Activated T-helper 2 cell treated with anti-CD3 and anti-CD28 coated beads, Interferon-gamma antibody, Interleukin-2, Interleukin-4, amounts not matched to agents 10 μg/mL and 5 μg/mL and 100 μg/mL, durations not matched to agents 14 hours and 24 hours and 36 hours (primary cell): ENCODE measurements at regions of chr10 and their contacts with region 1.

Region 1: DNA sequence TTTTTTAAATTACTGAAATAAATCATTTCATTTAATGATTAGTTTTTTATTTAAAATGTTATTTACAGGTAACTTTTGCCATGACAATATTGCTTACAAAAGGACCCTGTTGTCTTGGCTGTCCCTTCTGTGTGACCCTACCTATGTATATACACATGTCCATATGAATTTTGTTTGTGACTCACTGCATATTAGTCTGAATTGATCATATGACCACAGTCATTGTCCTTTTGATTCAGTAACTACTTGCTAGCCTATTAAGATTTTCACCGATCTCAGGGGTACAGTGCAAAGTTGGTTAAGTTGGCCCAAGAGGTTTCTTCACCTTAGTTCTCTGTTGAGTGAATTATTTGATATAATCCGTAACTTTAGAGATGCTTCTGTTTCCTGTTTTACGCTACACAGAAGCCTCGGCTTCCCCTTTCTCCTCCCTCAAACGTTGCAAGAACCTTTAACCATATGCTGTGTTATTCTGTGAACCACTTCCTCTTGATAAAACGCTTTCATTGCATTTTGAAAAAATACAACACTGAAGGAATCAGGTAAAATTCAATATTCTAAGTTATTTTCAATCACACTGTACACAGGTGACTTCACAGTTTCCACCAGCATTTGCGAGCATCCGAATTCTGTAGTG is 43.9 kb downstream of the APBB1IP start:
- DNase-seq: peak; percentile 38
- H3K4me3 Mint-ChIP-seq: peak overlapping the region; percentile 71
- H3K27ac Mint-ChIP-seq: peak overlapping the region; percentile 98
- H3K4me1 Mint-ChIP-seq: peaks cover 70% of the 10 kb centered on the region
- H3K27me3 Mint-ChIP-seq: no peaks in the 10 kb centered on the region

Region 2: GRCh38 chr10:26221541-26221940 is 260.5 kb before region 1 on chr10:
- intact Hi-C with region 1: no loop called
- DNase-seq: no peak
- H3K4me3 Mint-ChIP-seq: no peak overlapping the region
- H3K27ac Mint-ChIP-seq: no peak overlapping the region
- H3K4me1 Mint-ChIP-seq: peaks cover 7% of the 10 kb centered on the region
- H3K27me3 Mint-ChIP-seq: peaks cover 76% of the 10 kb centered on the region

Region 3: DNA sequence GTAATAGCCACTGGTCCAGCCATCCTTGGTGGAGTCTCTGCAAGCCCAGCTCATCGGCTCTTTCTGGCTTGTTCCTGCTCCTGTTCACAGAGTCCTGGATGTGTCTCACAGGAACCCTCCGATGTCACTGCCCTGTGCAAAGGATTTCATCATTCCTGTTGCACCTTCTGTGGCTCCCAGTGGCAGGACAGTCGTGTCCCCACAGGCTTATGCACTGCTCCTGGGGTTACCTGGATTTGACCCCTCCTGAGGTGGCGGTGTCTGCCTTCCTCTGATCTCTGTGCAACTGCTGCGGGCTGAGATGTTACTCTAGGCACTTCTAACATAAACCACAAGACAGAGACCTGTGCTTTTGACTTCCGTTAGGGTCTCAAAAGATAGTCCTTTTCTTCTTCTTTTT is 13.3 kb before region 1 on chr10:
- intact Hi-C with region 1: loop called (anchors 1 kb)
- DNase-seq: peak; percentile 32
- H3K4me3 Mint-ChIP-seq: peak overlapping the region; percentile 53
- H3K27ac Mint-ChIP-seq: peak overlapping the region; percentile 56
- H3K4me1 Mint-ChIP-seq: peaks cover 56% of the 10 kb centered on the region
- H3K27me3 Mint-ChIP-seq: no peaks in the 10 kb centered on the region